GM10248 (cell line): ENCODE measurements at regions of chr3 and their contacts with region 1.

Region 1: GRCh38 chr3:123993818-123994217 is 1.9 kb upstream of the ROPN1 start:
- DNase-seq: no peak
- CTCF ChIP-seq: no peak

Region 2: DNA sequence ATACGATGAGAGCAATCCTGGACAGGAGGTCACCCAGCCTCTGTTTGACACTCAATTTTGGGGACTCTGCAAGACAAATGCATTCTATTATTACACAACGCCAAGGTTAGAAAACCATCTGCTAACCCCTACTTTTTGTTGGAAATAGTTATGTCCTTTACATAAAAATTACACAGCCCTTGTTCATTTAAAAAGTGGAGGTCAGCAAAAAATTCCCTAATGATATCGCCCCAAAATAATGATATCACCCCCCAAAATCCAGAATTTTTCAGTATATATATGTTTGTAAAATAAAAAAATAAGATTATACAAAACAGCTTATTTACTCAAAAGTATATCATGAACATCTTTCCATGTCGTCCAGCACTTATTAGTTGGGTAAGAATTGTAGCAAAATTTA is 13.3 kb before region 1 on chr3:
- CTCF ChIA-PET with region 1: interaction called, 13 read pairs
- POLR2A ChIA-PET with region 1: no interaction called
- DNase-seq: no peak
- CTCF ChIP-seq: no peak